Lower leg skin (tissue), 4 donors: ENCODE measurements at regions of chr2 and their contacts with region 1.

Region 1: DNA sequence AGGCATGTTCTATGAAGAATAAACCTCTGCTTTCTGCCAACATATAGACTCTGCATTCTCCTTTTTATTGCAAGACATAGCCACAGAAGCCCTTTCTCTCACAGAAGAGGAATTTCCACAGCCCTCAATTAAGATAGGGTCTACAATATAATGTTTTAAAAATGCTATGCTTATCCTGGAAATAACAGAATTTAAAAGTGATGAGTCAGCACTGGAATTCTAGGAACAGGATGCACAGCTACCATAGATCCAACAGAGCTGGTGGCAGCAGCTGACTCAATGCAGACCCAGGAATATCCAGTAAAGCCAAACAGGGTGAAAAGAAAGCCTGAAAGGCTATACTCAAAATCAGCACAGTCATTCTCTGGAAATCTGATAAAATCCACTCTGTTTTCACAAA is 866.9 kb downstream of the TRIB2 start:
- DNase-seq: no peak
- H3K4me3 ChIP-seq: no peak overlapping the region
- CTCF ChIP-seq: no peak
- POLR2A ChIP-seq: no peak

Region 2: GRCh38 chr2:13413989-13414388 is 169.6 kb before region 1 on chr2:
- intact Hi-C with region 1: no loop called
- DNase-seq: no peak
- H3K4me3 ChIP-seq: no peak overlapping the region
- CTCF ChIP-seq: no peak
- POLR2A ChIP-seq: no peak

Region 3: GRCh38 chr2:13572466-13572865 is 11.1 kb before region 1 on chr2:
- intact Hi-C with region 1: loop called (anchors 1 kb)
- DNase-seq: no peak
- H3K4me3 ChIP-seq: no peak overlapping the region
- CTCF ChIP-seq: no peak
- POLR2A ChIP-seq: no peak

Region 4: GRCh38 chr2:13607139-13607538 is 23.5 kb after region 1 on chr2:
- intact Hi-C with region 1: no loop called
- DNase-seq: no peak
- H3K4me3 ChIP-seq: no peak overlapping the region
- CTCF ChIP-seq: no peak
- POLR2A ChIP-seq: no peak

Region 5: GRCh38 chr2:13884291-13884976 is 300.8 kb after region 1 on chr2:
- intact Hi-C with region 1: no loop called
- DNase-seq: no peak
- H3K4me3 ChIP-seq: no peak overlapping the region
- CTCF ChIP-seq: no peak
- POLR2A ChIP-seq: no peak